Caco-2 (cell line): ENCODE measurements at regions of chr2 and their contacts with region 1.

Region 1: GRCh38 chr2:75862547-75862946 is 151.8 kb upstream of the GCFC2 start:
- DNase-seq: no peak
- H3K4me3 ChIP-seq: no peak overlapping the region
- H3K4me3 Mint-ChIP-seq: no peak overlapping the region
- H3K27ac Mint-ChIP-seq: no peak overlapping the region
- H3K4me1 ChIP-seq: no peaks in the 10 kb centered on the region
- H3K4me1 Mint-ChIP-seq: no peaks in the 10 kb centered on the region
- H3K27me3 ChIP-seq: no peaks in the 10 kb centered on the region
- H3K27me3 Mint-ChIP-seq: no peaks in the 10 kb centered on the region
- CTCF ChIP-seq: no peak

Region 2: DNA sequence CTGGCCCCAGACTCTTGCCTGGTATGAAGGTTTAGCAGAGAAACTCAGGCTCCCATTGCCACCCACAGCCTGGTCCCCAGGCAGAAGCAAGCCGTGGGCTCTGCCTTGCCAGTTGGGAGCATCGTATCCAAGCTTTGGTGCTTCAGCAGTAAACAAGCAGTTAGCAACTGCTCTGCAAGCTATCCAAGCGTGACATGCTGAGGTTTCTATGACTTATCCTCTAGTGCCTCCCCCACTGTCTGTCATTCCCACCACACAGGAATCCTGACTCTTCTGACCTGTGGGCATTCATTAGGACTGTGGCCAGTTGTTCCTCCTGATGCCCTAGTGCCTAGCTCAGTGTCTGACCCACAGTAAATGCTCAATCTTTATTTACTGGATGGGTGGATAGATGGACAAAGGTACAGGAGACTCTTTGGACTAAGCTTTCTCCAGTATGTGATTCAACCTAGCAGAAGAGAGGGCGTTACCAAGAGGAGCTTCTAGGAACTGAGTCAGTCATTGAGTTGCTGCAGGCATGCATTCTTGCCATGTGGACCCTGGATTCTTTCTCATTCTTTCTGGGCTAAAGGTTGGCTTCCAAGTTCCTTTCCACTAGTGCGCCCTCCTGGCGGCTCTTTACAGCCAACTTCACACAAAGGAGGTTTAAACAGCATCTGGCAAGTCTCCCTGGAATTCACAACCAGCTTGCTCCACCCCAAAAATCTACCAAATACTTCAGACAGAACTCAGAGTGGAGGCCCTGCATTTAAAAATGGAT is 256.6 kb before region 1 on chr2:
- CTCF ChIA-PET with region 1: no interaction called
- POLR2A ChIA-PET with region 1: no interaction called
- intact Hi-C with region 1: no loop called
- DNase-seq: peak in 1 of 2 experiments; percentile 29
- H3K4me3 ChIP-seq: no peak overlapping the region
- H3K4me3 Mint-ChIP-seq: no peak overlapping the region
- H3K27ac Mint-ChIP-seq: no peak overlapping the region
- H3K4me1 ChIP-seq: peaks cover 11% of the 10 kb centered on the region; the same call in 1 of the 2 replicates
- H3K4me1 Mint-ChIP-seq: peaks cover 10% of the 10 kb centered on the region
- H3K27me3 ChIP-seq: no peaks in the 10 kb centered on the region; the same call in 1 of the 2 replicates
- H3K27me3 Mint-ChIP-seq: peaks cover 11% of the 10 kb centered on the region
- CTCF ChIP-seq: no peak

Region 3: GRCh38 chr2:75882530-75882929 is 20.0 kb after region 1 on chr2:
- CTCF ChIA-PET with region 1: no interaction called
- POLR2A ChIA-PET with region 1: no interaction called
- intact Hi-C with region 1: loop called (anchors 1 kb)
- DNase-seq: no peak
- H3K4me3 ChIP-seq: no peak overlapping the region
- H3K4me3 Mint-ChIP-seq: no peak overlapping the region
- H3K27ac Mint-ChIP-seq: no peak overlapping the region
- H3K4me1 ChIP-seq: no peaks in the 10 kb centered on the region
- H3K4me1 Mint-ChIP-seq: no peaks in the 10 kb centered on the region
- H3K27me3 ChIP-seq: no peaks in the 10 kb centered on the region
- H3K27me3 Mint-ChIP-seq: no peaks in the 10 kb centered on the region
- CTCF ChIP-seq: no peak